ENCODE measurements at regions of chr15 and their contacts with region 1.

Region 1: GRCh38 chr15:26889298-26889898 is 22.5 kb downstream of the GABRA5 start:
- DNase-seq: peak; percentile 21 to 82 (median 65)
- H3K4me3 ChIP-seq: no peak overlapping the region
- H3K27ac ChIP-seq: no peak overlapping the region
- H3K4me1 ChIP-seq: no peaks in the 10 kb centered on the region
- H3K27me3 ChIP-seq: peaks cover 12% of the 10 kb centered on the region
- CTCF ChIP-seq: peak; percentile 71 to 79 (median 74)
- POLR2A ChIP-seq: no peak

Region 2: GRCh38 chr15:26848498-26848897 is 40.9 kb before region 1 on chr15:
- intact Hi-C with region 1: no loop called
- DNase-seq: no peak
- H3K4me3 ChIP-seq: no peak overlapping the region
- H3K27ac ChIP-seq: no peak overlapping the region
- H3K4me1 ChIP-seq: no peaks in the 10 kb centered on the region
- H3K27me3 ChIP-seq: no peaks in the 10 kb centered on the region
- CTCF ChIP-seq: no peak
- POLR2A ChIP-seq: no peak

Region 3: DNA sequence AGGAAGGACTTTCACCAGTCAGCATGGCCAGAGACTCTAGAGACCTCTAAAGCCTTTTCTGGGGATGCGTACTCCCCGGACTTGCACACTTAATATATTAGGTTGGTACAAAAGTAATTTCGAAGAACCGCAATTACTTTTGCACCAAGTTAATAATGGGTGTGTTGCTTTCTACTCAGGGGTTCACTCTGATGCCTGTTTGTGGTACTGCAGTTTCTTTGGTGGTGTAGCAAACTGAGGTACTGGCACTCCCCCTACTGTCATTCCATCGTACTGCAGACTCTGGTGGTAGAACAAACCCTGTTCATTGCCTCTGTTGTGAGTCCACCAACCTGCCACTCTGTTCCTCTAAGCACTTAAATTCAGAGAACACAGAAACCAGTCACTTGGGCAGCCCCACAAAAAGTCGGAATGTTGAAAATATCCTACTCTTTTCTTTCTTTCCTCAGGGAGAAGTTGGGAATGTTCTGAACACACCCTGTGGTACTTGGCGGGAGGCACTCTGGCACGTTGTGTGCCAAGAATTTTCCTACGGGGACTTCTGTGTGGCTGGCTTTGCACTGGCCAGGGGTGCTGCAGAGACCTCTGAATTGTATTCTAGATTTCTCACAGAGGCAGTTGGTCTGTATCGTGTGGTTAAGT is 127.9 kb after region 1 on chr15:
- intact Hi-C with region 1: loop called in 1 of 2 experiments (anchors 10 kb)
- DNase-seq: peak; percentile 33 to 82 (median 60)
- H3K4me3 ChIP-seq: no peak overlapping the region
- H3K27ac ChIP-seq: no peak overlapping the region
- H3K4me1 ChIP-seq: no peaks in the 10 kb centered on the region
- H3K27me3 ChIP-seq: no peaks in the 10 kb centered on the region
- CTCF ChIP-seq: peak; percentile 42 to 89 (median 74)
- POLR2A ChIP-seq: no peak

Region 4: DNA sequence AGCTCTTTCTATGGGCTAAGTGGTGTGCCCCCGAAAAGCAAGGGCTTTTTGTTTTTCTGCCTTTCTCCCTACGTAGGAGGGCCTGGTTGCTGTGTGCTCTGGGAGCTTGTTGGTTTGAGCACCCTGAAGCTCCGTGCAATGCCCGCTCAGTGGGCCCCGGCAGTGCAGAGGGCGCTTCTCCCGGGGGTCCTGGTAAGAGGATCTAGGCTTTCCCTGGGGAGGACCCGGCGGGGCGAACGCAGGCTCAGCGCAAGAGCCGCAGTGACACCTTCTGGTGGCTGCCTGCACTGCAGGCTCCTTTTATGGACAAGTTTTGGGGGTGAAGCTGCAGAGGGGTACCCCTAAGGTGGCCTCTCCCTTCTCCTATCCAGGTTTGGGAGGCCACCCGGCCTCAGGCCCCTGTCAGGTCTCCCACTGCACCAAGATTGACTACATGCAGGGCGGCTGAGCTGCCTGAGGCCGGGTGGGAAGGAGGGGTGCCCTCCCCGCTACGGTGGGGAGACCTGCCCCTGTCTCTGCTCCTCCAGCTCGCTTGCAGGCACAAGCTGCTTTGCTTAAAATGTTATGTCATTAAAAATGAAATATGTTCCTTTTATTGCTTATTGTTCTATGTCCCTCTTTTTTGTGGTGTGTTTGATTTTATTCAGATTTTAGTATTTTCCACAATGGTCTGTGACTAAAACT is 469.5 kb after region 1 on chr15:
- intact Hi-C with region 1: loop called in 1 of 2 experiments (anchors 2 kb)
- DNase-seq: peak in 6 of 7 donors; percentile 11 to 60 (median 35)
- H3K4me3 ChIP-seq: no peak overlapping the region
- H3K27ac ChIP-seq: no peak overlapping the region
- H3K4me1 ChIP-seq: no peaks in the 10 kb centered on the region
- H3K27me3 ChIP-seq: peaks cover 4% of the 10 kb centered on the region
- CTCF ChIP-seq: peak; percentile 62 to 84 (median 75)
- POLR2A ChIP-seq: no peak

Region 5: GRCh38 chr15:28110481-28110881 is 1221.1 kb after region 1 on chr15:
- intact Hi-C with region 1: loop called in 1 of 2 experiments (anchors 10 kb)
- DNase-seq: peak in 1 of 7 donors; percentile 43
- H3K4me3 ChIP-seq: no peak overlapping the region
- H3K27ac ChIP-seq: no peak overlapping the region
- H3K4me1 ChIP-seq: peaks cover 13 to 16% of the 10 kb centered on the region in 2 donors
- H3K27me3 ChIP-seq: peaks cover 5% of the 10 kb centered on the region
- CTCF ChIP-seq: no peak
- POLR2A ChIP-seq: no peak